ENCODE measurements at regions of chr5 and their contacts with region 1.

Region 1: GRCh38 chr5:62305715-62306322 is at the start of gene KIF2A:
- DNase-seq: peak; percentile 87 to 91 (median 87)
- H3K4me3 ChIP-seq: peak within 1 kb of the TSS; percentile 72 to 91 (median 91)
- H3K4me3 Mint-ChIP-seq: peak within 1 kb of the TSS; percentile 91 to 99
- H3K27ac ChIP-seq: peak within 1 kb of the TSS; percentile 72 to 86
- H3K27ac Mint-ChIP-seq: peak within 1 kb of the TSS; percentile 90 to 96 (median 94)
- H3K4me1 ChIP-seq: peaks cover 16 to 21% of the 10 kb centered on the region in 2 donors
- H3K4me1 Mint-ChIP-seq: peaks cover 38% of the 10 kb centered on the region
- H3K27me3 ChIP-seq: no peaks in the 10 kb centered on the region
- H3K27me3 Mint-ChIP-seq: peaks cover 0 to 7% (median 6%) of the 10 kb centered on the region in 3 donors
- CTCF ChIP-seq: no peak
- polyA plus RNA-seq, gene KIF2A: 9.7 to 24.6 (median 21.7) TPM

Region 2: GRCh38 chr5:62231576-62231975 is 74.2 kb before region 1 on chr5:
- intact Hi-C with region 1: loop called in 1 of 2 experiments (anchors 10 kb)
- DNase-seq: no peak
- H3K4me3 ChIP-seq: no peak overlapping the region
- H3K4me3 Mint-ChIP-seq: no peak overlapping the region
- H3K27ac ChIP-seq: no peak overlapping the region
- H3K27ac Mint-ChIP-seq: peak overlapping the region; percentile 32 to 82 (median 55)
- H3K4me1 ChIP-seq: peaks cover 16 to 20% of the 10 kb centered on the region in 2 donors
- H3K4me1 Mint-ChIP-seq: peaks cover 33% of the 10 kb centered on the region
- H3K27me3 ChIP-seq: no peaks in the 10 kb centered on the region
- H3K27me3 Mint-ChIP-seq: peaks cover 0 to 6% (median 0%) of the 10 kb centered on the region in 3 donors
- CTCF ChIP-seq: no peak

Region 3: GRCh38 chr5:62354028-62354874 is 48.4 kb after region 1 on chr5:
- intact Hi-C with region 1: loop called in 1 of 2 experiments (anchors 10 kb)
- DNase-seq: peak; percentile 19 to 68 (median 44)
- H3K4me3 ChIP-seq: no peak overlapping the region
- H3K4me3 Mint-ChIP-seq: no peak overlapping the region
- H3K27ac ChIP-seq: no peak overlapping the region
- H3K27ac Mint-ChIP-seq: no peak overlapping the region
- H3K4me1 ChIP-seq: no peaks in the 10 kb centered on the region
- H3K4me1 Mint-ChIP-seq: no peaks in the 10 kb centered on the region
- H3K27me3 ChIP-seq: no peaks in the 10 kb centered on the region
- H3K27me3 Mint-ChIP-seq: peaks cover 0 to 3% (median 1%) of the 10 kb centered on the region in 3 donors
- CTCF ChIP-seq: peak; percentile 77

Region 4: DNA sequence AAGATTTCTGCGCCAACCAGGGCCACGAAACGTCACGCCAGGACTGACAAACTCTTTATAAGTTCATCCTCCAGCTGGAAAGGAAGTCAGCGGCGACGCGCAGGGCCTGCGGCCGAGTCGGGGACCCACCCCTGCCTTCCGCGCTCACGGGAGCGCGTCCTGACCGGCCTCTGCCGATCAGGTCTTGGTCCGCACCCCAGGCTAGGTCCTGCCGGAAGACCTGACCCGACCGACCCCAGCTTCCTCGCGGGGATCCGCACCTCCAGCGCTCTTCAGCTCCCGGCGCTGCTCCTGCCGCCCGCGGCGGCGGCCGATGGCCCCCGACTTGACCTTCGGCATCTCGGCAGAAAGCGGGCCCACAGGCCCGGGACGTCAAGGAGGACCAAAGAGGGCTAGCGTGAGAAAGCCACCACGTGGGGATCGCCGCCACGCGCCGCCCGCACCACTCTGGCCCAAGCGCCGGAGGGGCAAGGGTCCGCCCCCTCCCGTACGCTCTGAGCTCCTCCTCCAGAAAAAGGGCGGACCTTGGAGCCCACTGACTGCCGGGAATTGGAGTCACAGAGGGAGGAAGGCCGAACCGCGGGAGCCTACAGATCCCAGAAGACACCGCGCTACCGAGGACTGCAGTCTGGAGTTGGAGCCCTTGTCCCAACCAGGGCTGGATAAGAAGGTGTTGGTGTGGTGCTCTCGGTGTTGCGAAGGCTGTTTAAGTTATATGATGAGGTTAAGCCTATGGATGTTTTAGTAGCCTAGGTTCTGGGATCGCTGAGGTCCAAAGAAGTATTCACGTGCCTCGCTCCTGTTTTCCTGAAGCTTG is 97.8 kb after region 1 on chr5 and contains the start of gene DIMT1:
- intact Hi-C with region 1: loop called (anchors 10 kb)
- DNase-seq: peak; percentile 93 to 95 (median 95)
- H3K4me3 ChIP-seq: peak within 1 kb of the TSS; percentile 82 to 89 (median 84)
- H3K4me3 Mint-ChIP-seq: peak within 1 kb of the TSS; percentile 95 to 98
- H3K27ac ChIP-seq: peak within 1 kb of the TSS; percentile 82 to 91
- H3K27ac Mint-ChIP-seq: peak within 1 kb of the TSS; percentile 85 to 96 (median 92)
- H3K4me1 ChIP-seq: peaks cover 16 to 19% of the 10 kb centered on the region in 2 donors
- H3K4me1 Mint-ChIP-seq: peaks cover 19% of the 10 kb centered on the region
- H3K27me3 ChIP-seq: no peaks in the 10 kb centered on the region
- H3K27me3 Mint-ChIP-seq: peaks cover 0 to 2% (median 0%) of the 10 kb centered on the region in 3 donors
- CTCF ChIP-seq: no peak
- polyA plus RNA-seq, gene DIMT1: 10.1 to 27.6 (median 25.1) TPM

Measured in CD14-positive monocyte (primary cell).